Posterior vena cava (tissue), 2 donors: ENCODE measurements at regions of chr6 and their contacts with region 1.

Region 1: DNA sequence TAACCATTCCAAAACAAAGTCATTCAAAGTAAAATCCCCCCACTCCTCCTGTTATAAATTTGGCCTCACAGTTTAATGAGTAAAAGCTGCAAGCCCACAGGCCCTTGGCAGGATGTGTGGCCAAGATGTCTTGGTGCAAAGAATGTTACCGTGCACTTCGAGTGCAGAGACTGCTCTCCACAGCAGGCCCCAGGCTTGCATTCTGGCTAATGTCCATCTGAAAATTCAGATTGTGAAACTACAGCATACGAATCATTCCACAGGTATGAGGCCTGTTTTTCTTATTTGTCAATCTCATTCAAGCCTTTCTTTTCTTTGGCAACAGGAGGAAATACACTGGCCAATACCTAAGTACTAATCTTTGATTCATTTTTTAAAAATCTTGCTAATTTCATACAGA is 7.1 kb downstream of the RPS6KA2 start:
- DNase-seq: no peak

Region 2: DNA sequence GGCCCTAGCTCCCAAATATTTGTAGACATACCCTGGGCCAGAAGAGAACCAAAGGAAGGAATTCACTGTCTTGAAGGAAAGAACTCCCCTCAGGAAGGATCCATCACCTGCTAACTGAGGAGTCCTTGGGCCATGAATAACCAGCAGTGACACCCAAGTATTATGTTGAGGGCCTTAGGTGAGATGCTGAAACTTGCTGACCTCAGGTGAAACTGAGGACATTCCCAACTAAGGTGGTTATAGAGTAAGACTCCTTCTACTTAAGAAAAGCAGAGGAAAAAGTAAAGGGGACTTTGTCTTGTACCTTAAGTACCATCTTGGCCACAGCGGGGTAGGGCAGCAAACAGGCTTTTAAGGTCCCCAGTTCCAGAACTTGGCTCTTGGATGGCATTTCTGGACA is 1802.2 kb before region 1 on chr6:
- intact Hi-C with region 1: no loop called
- DNase-seq: no peak

Region 3: GRCh38 chr6:165704045-165704748 is 915.7 kb before region 1 on chr6:
- intact Hi-C with region 1: loop called in 1 of 2 experiments (anchors 10 kb)
- DNase-seq: no peak

Region 4: GRCh38 chr6:166678426-166678825 is 58.5 kb after region 1 on chr6:
- intact Hi-C with region 1: no loop called
- DNase-seq: no peak

Region 5: GRCh38 chr6:166691199-166691598 is 71.3 kb after region 1 on chr6:
- intact Hi-C with region 1: no loop called
- DNase-seq: no peak